Caco-2 (cell line): ENCODE measurements at regions of chr10 and their contacts with region 1.

Region 1: DNA sequence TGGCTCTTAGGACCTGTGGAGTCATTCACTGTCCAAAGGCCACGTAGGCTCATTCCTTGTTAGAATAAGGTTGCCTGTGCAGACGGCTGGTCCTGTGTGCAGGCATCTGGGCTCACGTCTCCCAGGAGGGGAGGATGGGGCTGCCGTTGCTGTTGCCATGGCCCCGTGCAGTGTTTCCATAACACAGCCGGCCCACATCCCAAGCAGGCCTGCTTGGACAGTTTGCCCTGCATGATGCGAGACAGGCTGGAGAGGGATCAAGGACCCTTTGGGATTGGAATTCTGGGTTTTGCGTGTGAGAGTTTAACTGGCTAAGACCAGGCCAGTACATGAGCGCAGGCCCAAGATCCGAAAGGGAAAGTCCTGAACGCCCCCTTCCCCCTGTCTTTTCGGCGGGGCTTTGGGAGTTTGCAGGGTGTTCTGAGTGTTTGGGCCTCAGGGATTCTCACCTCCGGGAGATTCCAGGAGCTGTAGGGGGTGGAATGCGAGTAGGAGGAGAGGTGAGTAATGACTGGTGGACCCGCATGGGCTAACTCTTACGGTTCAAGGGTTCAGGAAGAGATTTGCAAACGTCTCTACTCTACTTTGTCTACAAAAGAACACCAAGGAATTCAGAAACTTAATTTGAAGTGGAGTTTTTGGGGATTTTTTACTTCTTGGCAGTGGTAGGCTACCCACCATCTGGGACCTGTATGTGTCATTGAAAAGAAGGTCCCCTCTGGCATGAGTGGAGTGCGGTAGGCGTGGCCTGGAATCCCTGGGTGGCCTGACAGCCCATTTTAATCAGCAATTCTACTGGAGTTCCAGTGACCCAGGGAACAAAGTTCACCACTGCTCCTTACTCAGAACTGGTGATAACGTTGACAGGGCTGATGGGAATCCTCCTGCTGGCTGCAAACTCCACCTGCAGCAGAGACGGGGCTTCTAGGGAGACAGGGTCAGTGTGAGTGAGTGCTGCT is 125.3 kb downstream of the ITIH5 start:
- DNase-seq: peak; percentile 92 to 95
- H3K4me3 ChIP-seq: no peak overlapping the region
- H3K4me3 Mint-ChIP-seq: peak overlapping the region; percentile 56
- H3K27ac Mint-ChIP-seq: peak overlapping the region; percentile 98
- H3K4me1 ChIP-seq: peaks cover 41% of the 10 kb centered on the region
- H3K4me1 Mint-ChIP-seq: peaks cover 30% of the 10 kb centered on the region
- H3K27me3 ChIP-seq: no peaks in the 10 kb centered on the region
- H3K27me3 Mint-ChIP-seq: no peaks in the 10 kb centered on the region
- CTCF ChIP-seq: peak; percentile 41 to 59

Region 2: DNA sequence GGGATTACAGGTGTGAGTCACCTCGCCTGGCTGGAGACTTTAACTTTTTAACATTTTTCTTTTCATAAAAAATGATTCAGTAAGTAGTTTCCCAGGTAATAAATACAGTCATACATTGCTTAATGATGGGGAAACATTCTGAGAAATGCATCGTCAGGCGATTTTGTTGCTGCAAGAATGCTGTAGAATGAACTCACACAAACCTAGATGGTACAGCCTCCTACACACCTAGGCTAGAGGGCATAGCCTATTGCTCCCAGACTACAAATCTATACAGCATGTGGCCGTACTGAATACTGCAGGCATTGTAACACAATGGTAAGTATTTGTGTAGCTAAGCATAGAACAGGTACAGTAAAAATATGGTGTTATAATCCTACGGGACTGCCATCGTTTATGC is 22.1 kb before region 1 on chr10:
- CTCF ChIA-PET with region 1: no interaction called
- POLR2A ChIA-PET with region 1: no interaction called
- intact Hi-C with region 1: no loop called
- DNase-seq: no peak
- H3K4me3 ChIP-seq: no peak overlapping the region
- H3K4me3 Mint-ChIP-seq: no peak overlapping the region
- H3K27ac Mint-ChIP-seq: no peak overlapping the region
- H3K4me1 ChIP-seq: no peaks in the 10 kb centered on the region
- H3K4me1 Mint-ChIP-seq: no peaks in the 10 kb centered on the region
- H3K27me3 ChIP-seq: peaks cover 4% of the 10 kb centered on the region; the same call in 1 of the 2 replicates
- H3K27me3 Mint-ChIP-seq: peaks cover 28% of the 10 kb centered on the region
- CTCF ChIP-seq: no peak

Region 3: DNA sequence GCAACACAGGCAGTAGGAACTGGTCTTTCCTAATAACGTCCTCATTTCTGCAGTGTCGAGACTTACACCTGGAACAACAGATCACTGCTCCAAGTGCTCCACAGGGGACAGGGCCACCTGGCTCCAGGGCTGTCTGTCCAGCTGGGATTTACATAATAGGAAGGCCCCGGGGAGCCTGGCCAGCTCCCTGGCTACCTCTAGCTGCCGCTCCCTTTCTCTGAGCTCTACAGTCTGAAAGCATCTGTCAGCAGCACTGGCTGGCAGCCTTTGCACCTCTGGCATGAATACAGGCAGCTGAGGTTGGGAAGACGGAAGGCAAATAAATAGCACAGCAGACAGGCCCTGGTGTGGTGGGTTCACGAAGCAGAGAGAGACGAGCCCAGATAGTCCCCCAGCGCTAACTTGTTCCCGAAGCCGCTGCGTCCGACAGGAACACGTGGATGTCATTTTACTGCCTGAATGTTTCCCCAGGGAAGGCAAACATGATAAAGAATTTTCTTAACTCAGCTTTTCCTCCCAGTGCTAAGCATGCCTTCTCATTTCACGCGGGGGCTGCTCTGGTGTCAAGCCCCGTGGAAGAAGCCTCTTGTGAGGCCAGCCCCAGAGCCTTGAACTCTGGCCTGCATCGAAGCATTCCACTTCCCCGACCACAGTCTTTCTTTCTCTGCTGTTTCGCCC is 19.9 kb after region 1 on chr10:
- CTCF ChIA-PET with region 1: no interaction called
- POLR2A ChIA-PET with region 1: no interaction called
- intact Hi-C with region 1: loop called (anchors 1 kb)
- DNase-seq: peak in 1 of 2 experiments; percentile 38
- H3K4me3 ChIP-seq: no peak overlapping the region
- H3K4me3 Mint-ChIP-seq: peak overlapping the region; percentile 28
- H3K27ac Mint-ChIP-seq: no peak overlapping the region
- H3K4me1 ChIP-seq: no peaks in the 10 kb centered on the region
- H3K4me1 Mint-ChIP-seq: no peaks in the 10 kb centered on the region
- H3K27me3 ChIP-seq: no peaks in the 10 kb centered on the region
- H3K27me3 Mint-ChIP-seq: no peaks in the 10 kb centered on the region
- CTCF ChIP-seq: no peak

Region 4: GRCh38 chr10:7572391-7572790 is 31.0 kb after region 1 on chr10:
- CTCF ChIA-PET with region 1: no interaction called
- POLR2A ChIA-PET with region 1: no interaction called
- intact Hi-C with region 1: no loop called
- DNase-seq: no peak
- H3K4me3 ChIP-seq: no peak overlapping the region
- H3K4me3 Mint-ChIP-seq: no peak overlapping the region
- H3K27ac Mint-ChIP-seq: no peak overlapping the region
- H3K4me1 ChIP-seq: no peaks in the 10 kb centered on the region
- H3K4me1 Mint-ChIP-seq: no peaks in the 10 kb centered on the region
- H3K27me3 ChIP-seq: no peaks in the 10 kb centered on the region
- H3K27me3 Mint-ChIP-seq: no peaks in the 10 kb centered on the region
- CTCF ChIP-seq: no peak

Region 5: DNA sequence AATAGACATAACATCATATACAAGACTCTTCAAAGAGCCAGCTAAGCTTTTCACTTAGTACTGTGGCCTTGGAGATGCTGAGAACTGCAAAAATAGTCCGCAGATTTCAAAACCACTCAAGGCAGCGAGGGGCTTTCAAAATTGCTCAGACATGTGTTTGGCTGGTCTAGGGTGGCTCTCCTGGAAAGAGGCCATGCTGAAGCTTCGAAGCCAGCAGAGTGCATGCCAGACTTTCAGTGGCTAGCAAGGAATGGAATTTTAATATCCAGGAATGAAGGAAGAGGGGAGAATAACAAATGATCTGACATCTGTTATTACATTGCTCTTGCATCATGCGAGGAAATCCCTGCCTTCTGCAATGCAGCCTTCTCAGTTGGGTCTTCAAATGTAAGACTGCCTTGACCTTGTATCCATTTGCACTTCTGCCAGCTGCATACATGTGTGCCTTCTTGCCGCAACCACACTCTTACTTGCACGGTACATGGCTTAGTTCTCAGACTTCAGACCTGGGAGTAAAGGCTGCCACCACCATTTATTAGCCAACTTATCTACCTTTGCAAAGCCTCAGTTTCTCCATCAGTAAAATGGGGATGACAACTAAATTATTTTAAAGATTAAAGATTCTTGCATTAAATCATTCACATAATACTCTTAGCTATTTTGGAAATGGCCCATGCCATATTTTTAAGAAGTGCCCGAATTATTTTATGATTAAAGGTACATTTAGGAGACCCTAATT is 69.4 kb after region 1 on chr10:
- CTCF ChIA-PET with region 1: no interaction called
- POLR2A ChIA-PET with region 1: no interaction called
- intact Hi-C with region 1: loop called (anchors 5 kb)
- DNase-seq: peak in 1 of 2 experiments; percentile 46
- H3K4me3 ChIP-seq: no peak overlapping the region
- H3K4me3 Mint-ChIP-seq: no peak overlapping the region
- H3K27ac Mint-ChIP-seq: no peak overlapping the region
- H3K4me1 ChIP-seq: no peaks in the 10 kb centered on the region
- H3K4me1 Mint-ChIP-seq: peaks cover 8% of the 10 kb centered on the region
- H3K27me3 ChIP-seq: no peaks in the 10 kb centered on the region
- H3K27me3 Mint-ChIP-seq: peaks cover 10% of the 10 kb centered on the region
- CTCF ChIP-seq: no peak

Region 6: GRCh38 chr10:7622969-7623368 is 81.6 kb after region 1 on chr10:
- CTCF ChIA-PET with region 1: no interaction called
- POLR2A ChIA-PET with region 1: no interaction called
- intact Hi-C with region 1: loop called (anchors 5 kb)
- DNase-seq: peak in 1 of 2 experiments; percentile 42
- H3K4me3 ChIP-seq: no peak overlapping the region
- H3K4me3 Mint-ChIP-seq: no peak overlapping the region
- H3K27ac Mint-ChIP-seq: no peak overlapping the region
- H3K4me1 ChIP-seq: no peaks in the 10 kb centered on the region
- H3K4me1 Mint-ChIP-seq: no peaks in the 10 kb centered on the region
- H3K27me3 ChIP-seq: no peaks in the 10 kb centered on the region
- H3K27me3 Mint-ChIP-seq: peaks cover 3% of the 10 kb centered on the region
- CTCF ChIP-seq: peak in 1 of 2 experiments; percentile 46

Region 7: GRCh38 chr10:7700577-7701125 is 159.2 kb after region 1 on chr10:
- CTCF ChIA-PET with region 1: interaction called, 4 read pairs
- POLR2A ChIA-PET with region 1: no interaction called
- intact Hi-C with region 1: loop called (anchors 1 kb)
- DNase-seq: peak; percentile 61 to 80
- H3K4me3 ChIP-seq: no peak overlapping the region
- H3K4me3 Mint-ChIP-seq: no peak overlapping the region
- H3K27ac Mint-ChIP-seq: peak overlapping the region; percentile 52
- H3K4me1 ChIP-seq: peaks cover 8% of the 10 kb centered on the region
- H3K4me1 Mint-ChIP-seq: no peaks in the 10 kb centered on the region
- H3K27me3 ChIP-seq: no peaks in the 10 kb centered on the region
- H3K27me3 Mint-ChIP-seq: no peaks in the 10 kb centered on the region
- CTCF ChIP-seq: no peak